ENCODE measurements at regions of chr1 and their contacts with region 1.

Region 1: DNA sequence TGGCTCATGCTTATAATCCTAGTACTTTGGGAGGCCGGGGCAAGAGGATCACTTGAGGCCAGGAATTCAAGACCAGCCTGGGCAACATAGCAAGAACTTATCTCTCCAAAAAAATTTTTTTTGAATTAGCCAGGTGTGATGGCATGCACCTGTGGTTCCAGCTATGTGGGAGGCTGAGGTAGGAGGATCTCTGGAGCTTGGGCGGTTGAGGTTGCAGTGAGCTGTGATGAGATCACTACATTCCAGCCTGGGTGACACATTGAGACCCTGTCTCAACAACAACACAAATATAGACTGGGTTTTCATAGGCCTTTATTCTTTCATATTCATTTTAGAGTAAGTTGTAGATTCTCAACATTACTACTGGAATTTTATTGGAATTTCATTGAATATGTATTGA is 12.8 kb downstream of the MED18 start:
- DNase-seq: no peak
- ATAC-seq: no peak
- H3K4me3 Mint-ChIP-seq: no peak overlapping the region
- H3K27ac Mint-ChIP-seq: no peak overlapping the region
- H3K4me1 Mint-ChIP-seq: peaks cover 20% of the 10 kb centered on the region
- H3K27me3 Mint-ChIP-seq: no peaks in the 10 kb centered on the region

Region 2: GRCh38 chr1:28213315-28213714 is 128.3 kb before region 1 on chr1:
- CTCF ChIA-PET with region 1: no interaction called
- POLR2A ChIA-PET with region 1: no interaction called
- DNase-seq: no peak
- ATAC-seq: no peak
- H3K4me3 Mint-ChIP-seq: no peak overlapping the region
- H3K27ac Mint-ChIP-seq: no peak overlapping the region
- H3K4me1 Mint-ChIP-seq: peaks cover 12% of the 10 kb centered on the region
- H3K27me3 Mint-ChIP-seq: no peaks in the 10 kb centered on the region

Region 3: DNA sequence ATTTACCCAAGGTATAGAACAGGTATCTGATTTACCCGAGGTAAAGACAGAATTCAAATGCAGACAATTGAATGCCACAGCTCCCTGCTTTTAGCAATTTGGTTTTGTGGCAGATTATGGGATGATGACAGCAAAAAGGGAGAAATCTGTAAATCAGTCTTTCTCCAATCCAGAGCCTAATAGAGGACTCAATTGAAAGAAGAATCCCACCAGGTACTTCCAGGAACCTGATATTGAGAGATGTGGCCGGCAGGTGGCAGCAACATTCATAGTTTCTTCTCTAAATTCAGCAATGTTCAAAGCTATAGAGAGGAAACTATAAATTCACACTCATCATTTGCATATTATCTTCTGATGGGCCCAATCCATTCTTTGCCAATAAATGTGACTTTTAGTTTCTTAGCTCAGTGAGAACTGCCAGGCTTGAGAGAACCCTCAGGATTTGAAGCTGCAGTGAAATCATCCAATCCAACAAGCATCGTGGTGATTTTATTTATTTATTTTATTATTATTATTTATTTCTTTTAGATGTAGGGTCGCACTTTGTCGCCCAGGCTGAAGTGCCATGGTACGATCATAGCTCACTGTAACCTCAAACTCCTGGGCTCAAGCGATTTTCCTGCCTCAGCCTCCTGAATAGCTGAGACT is 18.1 kb after region 1 on chr1:
- CTCF ChIA-PET with region 1: interaction called, 24 read pairs
- POLR2A ChIA-PET with region 1: no interaction called
- DNase-seq: peak; percentile 87
- ATAC-seq: peak; percentile 68
- H3K4me3 Mint-ChIP-seq: no peak overlapping the region
- H3K27ac Mint-ChIP-seq: no peak overlapping the region
- H3K4me1 Mint-ChIP-seq: peaks cover 10% of the 10 kb centered on the region
- H3K27me3 Mint-ChIP-seq: peaks cover 3% of the 10 kb centered on the region

Region 4: DNA sequence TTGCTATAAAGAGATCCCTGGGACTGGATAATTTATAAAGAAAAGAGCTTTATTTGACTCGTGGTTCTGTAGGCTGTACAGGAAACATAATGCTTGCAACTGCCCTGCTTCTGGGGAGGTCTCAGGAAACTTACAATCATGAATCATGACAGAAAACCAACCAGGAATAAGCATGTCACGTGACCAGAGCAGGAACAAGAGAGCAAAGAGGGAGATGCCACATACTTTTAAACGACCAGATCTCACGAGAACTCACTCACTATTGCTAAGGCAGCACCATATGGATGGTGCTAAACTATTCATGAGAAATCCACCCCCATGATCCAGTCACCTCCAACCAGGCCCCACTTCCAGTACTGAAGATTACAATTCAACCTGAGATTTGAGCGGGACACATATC is 114.5 kb after region 1 on chr1:
- CTCF ChIA-PET with region 1: no interaction called
- POLR2A ChIA-PET with region 1: no interaction called
- DNase-seq: peak; percentile 38
- ATAC-seq: peak; percentile 58
- H3K4me3 Mint-ChIP-seq: peak overlapping the region; percentile 10
- H3K27ac Mint-ChIP-seq: peak overlapping the region; percentile 79
- H3K4me1 Mint-ChIP-seq: peaks cover 15% of the 10 kb centered on the region
- H3K27me3 Mint-ChIP-seq: no peaks in the 10 kb centered on the region